Activated naive CD4-positive, alpha-beta T cell treated with anti-CD3 and anti-CD28 coated beads for 36 hours (primary cell): ENCODE measurements at regions of chr16 and their contacts with region 1.

Region 1: GRCh38 chr16:84754353-84754856 is 54.6 kb downstream of the USP10 start:
- DNase-seq: peak; percentile 87
- H3K4me3 Mint-ChIP-seq: no peak overlapping the region
- H3K27ac Mint-ChIP-seq: no peak overlapping the region
- H3K4me1 Mint-ChIP-seq: peaks cover 86% of the 10 kb centered on the region
- H3K27me3 Mint-ChIP-seq: no peaks in the 10 kb centered on the region

Region 2: DNA sequence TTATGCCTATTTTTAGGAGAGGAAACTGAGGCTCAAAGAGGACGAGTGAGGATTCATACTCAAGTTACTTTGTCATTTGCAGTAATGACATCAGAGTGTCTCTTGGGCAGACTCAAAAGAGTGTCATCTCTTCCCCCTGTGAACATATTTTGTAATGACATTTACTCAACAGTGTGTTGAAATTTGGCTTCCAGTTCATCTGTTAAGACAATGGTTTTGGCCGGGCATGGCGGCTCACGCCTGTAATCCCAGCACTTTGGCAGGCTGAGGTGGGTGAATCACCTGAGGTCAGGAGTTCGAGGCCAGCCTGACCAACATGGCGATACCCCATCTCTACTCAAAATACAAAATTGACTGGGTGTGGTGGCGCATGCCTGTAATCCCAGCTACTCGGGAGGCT is 430.8 kb before region 1 on chr16:
- CTCF ChIA-PET with region 1: no interaction called
- intact Hi-C with region 1: no loop called
- DNase-seq: no peak
- H3K4me3 Mint-ChIP-seq: no peak overlapping the region
- H3K27ac Mint-ChIP-seq: no peak overlapping the region
- H3K4me1 Mint-ChIP-seq: no peaks in the 10 kb centered on the region
- H3K27me3 Mint-ChIP-seq: peaks cover 1% of the 10 kb centered on the region

Region 3: DNA sequence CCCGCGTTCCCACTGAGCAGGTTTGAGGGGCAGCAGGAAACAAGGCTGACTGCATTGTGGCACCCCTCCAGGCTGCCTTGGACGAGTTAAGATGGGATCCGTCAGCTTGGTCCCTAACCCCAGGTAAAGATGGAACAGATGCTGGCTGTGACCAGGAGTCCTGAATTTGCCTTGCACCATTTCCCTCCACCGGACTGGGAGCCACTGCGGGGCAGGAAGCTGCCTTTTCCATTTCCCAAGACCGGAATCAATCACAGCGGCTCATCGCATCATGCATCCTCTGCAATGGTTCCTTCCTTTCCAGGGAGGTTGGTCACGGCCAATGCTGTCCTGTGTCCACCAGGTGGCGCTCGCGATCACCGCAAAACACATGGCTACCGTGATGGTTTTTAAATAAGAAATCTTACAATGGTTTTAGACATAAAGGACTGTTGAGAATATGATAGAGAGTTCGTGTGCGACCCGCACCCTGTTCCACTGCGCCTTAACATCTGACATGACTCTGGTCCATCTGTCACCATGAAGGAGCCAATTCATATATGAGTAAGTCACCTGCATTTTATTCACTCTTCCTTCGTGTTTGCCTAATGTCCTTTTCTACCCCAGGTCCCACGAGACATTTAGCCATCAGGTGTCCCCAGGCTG is 243.1 kb before region 1 on chr16:
- CTCF ChIA-PET with region 1: interaction called, 5 read pairs
- intact Hi-C with region 1: loop called (anchors 5 kb)
- DNase-seq: peak; percentile 86
- H3K4me3 Mint-ChIP-seq: no peak overlapping the region
- H3K27ac Mint-ChIP-seq: no peak overlapping the region
- H3K4me1 Mint-ChIP-seq: peaks cover 64% of the 10 kb centered on the region
- H3K27me3 Mint-ChIP-seq: no peaks in the 10 kb centered on the region

Region 4: DNA sequence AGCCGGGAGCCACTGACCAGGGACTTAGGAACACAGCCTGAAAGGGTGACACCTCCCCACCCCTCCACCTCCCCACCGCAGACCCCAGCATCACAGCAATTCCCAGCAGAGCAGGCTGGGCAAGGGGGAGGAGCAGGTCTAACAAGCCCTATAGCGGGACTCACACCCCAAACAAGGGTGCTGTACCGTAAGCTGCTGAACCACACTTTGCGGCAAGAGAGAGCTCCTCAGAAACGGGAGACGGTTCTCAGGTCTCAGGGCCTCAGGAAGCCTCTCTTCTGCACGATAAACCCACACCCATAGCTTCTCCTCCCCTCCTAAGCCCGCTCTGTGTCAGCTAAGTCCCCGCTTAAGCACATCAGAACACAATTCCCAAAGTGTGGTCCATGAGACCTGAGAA is 124.8 kb before region 1 on chr16:
- CTCF ChIA-PET with region 1: no interaction called
- intact Hi-C with region 1: no loop called
- DNase-seq: peak; percentile 37
- H3K4me3 Mint-ChIP-seq: no peak overlapping the region
- H3K27ac Mint-ChIP-seq: no peak overlapping the region
- H3K4me1 Mint-ChIP-seq: peaks cover 29% of the 10 kb centered on the region
- H3K27me3 Mint-ChIP-seq: no peaks in the 10 kb centered on the region

Region 5: GRCh38 chr16:84810518-84811273 is 56.3 kb after region 1 on chr16:
- CTCF ChIA-PET with region 1: interaction called, 4 read pairs
- intact Hi-C with region 1: loop called (anchors 2 kb)
- DNase-seq: peak; percentile 65
- H3K4me3 Mint-ChIP-seq: no peak overlapping the region
- H3K27ac Mint-ChIP-seq: peak overlapping the region; percentile 71
- H3K4me1 Mint-ChIP-seq: peaks cover 22% of the 10 kb centered on the region
- H3K27me3 Mint-ChIP-seq: peaks cover 4% of the 10 kb centered on the region

Region 6: DNA sequence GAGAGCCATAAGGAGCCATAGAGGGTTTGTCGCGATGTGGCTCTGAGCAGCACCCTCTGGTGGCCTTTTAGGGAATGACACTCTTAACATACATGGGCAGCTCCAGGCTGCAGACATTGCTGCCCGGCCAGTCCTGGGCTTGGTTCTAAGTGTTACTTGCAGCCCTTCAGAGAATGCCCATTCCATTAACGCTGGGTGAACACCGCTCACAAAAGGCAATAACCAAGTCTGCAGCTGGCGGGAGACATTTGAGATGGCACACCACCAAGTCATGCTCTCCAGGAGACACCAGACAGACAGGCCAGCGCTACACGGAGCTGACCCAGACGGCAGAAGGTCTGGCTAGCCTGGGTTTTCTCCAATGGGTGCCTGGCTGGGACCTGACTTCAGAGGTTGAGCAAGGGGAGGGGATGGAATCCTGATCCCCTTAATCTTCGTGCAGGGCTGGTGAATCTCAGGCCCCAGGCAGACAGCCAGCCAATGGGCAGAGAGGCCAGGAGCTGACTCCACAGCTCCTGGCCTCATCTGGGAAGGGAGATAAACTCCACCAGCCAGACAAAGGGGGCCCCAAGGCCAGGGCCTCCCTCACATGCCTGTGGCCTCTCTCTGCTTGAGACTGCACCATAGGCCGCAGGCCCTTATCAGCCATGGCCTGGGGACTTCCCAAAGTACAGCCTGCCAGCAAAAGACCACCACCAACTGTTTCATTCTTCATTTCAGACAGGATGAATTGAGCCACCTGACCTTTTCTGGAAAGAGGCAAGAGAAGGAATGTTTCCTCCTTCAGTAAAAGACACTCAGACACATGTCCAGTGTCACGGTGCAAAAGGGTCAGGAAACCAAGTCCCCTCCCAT is 198.2 kb after region 1 on chr16:
- CTCF ChIA-PET with region 1: interaction called, 53 read pairs
- intact Hi-C with region 1: loop called (anchors 1 kb)
- DNase-seq: peak; percentile 83
- H3K4me3 Mint-ChIP-seq: no peak overlapping the region
- H3K27ac Mint-ChIP-seq: no peak overlapping the region
- H3K4me1 Mint-ChIP-seq: no peaks in the 10 kb centered on the region
- H3K27me3 Mint-ChIP-seq: no peaks in the 10 kb centered on the region

Region 7: DNA sequence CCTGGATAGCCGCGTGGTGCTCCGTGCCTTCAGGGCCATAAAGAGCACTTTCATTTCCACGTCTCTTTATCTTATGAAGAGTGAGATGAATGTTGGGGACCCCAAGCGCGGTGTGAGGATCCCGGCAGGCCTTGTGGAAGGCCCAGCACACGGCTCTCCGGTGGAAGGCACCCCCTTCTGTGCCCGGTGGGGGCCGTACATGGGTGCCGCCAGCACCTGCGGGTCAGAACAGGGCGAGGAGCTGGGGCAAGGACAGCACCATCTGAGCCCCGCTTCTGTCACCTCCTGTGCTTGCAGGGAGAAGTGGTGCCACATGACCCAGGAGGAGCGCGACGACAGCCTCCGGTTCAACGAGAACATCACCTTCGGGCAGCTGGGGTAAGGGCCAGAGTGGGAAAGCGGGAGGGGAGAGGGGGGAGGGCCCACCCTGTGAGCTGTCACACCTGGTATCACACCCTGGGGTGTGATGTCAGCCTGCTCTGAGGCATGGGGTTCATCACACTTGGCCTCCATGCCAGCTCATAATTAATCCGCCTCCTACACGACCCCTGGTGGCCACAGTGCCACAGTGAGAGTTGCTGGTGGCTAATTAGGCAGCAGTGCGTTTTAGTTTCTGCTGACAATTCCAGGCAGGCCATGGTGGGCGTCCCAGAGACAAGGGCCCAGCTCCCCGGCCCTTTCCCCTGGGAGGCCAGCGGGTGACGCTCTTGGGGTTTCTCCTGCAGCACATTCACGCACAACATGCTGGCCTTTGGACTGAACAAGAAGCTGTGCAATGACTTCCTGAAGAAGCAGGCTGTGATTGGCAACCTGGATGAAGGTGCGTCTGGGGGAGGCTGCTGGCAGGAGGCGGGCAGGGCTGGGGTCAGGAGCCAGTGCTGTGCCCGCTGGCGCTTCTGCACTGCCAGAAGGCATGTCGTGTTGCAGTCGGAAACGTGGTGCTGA is 332.2 kb after region 1 on chr16:
- CTCF ChIA-PET with region 1: no interaction called
- intact Hi-C with region 1: loop called (anchors 1 kb)
- DNase-seq: peak; percentile 88
- H3K4me3 Mint-ChIP-seq: no peak overlapping the region
- H3K27ac Mint-ChIP-seq: no peak overlapping the region
- H3K4me1 Mint-ChIP-seq: peaks cover 23% of the 10 kb centered on the region
- H3K27me3 Mint-ChIP-seq: no peaks in the 10 kb centered on the region